Endothelial cell of umbilical vein (primary cell): ENCODE measurements at regions of chr2 and their contacts with region 1.

Region 1: DNA sequence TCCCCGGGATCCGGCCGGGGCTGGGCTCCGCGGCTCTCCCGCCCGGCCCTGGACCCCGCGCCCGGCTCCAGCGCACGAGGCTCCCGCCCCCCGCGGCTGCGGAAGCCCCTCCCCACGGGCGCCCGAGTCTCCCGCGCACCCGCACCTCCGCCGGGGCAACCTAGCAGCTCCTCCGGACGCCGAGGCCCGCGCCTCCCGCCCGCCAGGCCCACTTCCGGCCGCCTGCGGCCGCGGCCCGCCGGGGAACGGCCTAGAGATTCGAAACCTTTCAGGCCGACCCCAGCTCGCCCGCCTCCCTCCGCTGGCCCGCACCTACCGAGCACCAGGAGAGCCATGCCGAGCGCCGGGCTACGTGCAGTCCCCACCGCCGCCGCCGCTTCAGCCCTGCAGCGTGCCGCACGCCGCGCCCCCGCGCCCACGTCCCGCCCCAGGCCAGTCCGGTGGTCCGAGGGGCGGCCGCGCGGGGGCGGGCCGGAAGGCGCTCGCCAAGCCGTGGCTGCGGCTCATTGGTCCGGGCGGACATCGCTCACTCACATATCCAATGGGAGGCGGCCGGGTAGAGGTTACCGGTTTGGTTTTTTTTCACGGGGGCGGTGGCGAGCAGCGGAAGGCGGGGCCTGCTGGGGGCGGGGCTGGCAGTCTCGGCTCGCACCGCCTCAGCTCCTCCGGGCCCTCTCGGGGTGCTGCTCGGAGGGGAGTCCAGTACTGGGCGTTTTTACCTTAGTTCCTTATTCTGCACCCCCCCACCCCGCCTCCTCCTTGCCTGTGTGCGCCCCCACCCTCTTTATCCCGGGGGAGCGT is at the start of gene PDIA6:
- DNase-seq: peak; percentile 98
- H3K4me3 ChIP-seq: peak within 1 kb of the TSS; percentile 53 to 95 (median 67)
- H3K27ac ChIP-seq: peak within 1 kb of the TSS; percentile 64
- H3K4me1 ChIP-seq: peaks cover 27% of the 10 kb centered on the region
- H3K27me3 ChIP-seq: peaks cover 0 to 2% of the 10 kb centered on the region in 2 experiments
- CTCF ChIP-seq: no peak
- POLR2A ChIP-seq: peak; percentile 72
- total RNA-seq, gene PDIA6: 424 and 433 TPM in 2 replicates

Region 2: DNA sequence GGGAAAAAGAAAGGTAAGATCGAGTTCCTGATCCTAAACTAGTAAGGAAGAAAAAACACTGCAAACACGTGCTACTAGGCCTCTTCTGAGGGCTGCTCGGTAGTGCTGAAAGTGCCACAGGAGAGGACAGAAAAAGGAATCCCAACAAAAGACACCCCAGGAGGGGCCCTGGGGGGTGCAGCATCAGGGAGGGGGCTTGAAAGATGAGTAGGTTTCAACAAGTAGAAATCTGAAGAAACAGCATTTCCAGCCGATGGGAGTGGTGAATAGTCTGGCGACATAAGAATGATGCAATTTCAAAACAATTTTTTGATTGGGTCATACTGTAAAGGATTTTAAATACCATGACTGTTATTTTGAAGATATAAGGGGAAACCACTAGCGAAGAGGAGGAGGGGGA is 221.4 kb before region 1 on chr2:
- CTCF ChIA-PET with region 1: no interaction called
- POLR2A ChIA-PET with region 1: no interaction called
- dilution Hi-C with region 1: no loop called
- intact Hi-C with region 1: no loop called
- DNase-seq: no peak
- H3K4me3 ChIP-seq: no peak overlapping the region
- H3K27ac ChIP-seq: no peak overlapping the region
- H3K4me1 ChIP-seq: peaks cover 15% of the 10 kb centered on the region
- H3K27me3 ChIP-seq: no peaks in the 10 kb centered on the region
- CTCF ChIP-seq: no peak
- POLR2A ChIP-seq: no peak

Region 3: DNA sequence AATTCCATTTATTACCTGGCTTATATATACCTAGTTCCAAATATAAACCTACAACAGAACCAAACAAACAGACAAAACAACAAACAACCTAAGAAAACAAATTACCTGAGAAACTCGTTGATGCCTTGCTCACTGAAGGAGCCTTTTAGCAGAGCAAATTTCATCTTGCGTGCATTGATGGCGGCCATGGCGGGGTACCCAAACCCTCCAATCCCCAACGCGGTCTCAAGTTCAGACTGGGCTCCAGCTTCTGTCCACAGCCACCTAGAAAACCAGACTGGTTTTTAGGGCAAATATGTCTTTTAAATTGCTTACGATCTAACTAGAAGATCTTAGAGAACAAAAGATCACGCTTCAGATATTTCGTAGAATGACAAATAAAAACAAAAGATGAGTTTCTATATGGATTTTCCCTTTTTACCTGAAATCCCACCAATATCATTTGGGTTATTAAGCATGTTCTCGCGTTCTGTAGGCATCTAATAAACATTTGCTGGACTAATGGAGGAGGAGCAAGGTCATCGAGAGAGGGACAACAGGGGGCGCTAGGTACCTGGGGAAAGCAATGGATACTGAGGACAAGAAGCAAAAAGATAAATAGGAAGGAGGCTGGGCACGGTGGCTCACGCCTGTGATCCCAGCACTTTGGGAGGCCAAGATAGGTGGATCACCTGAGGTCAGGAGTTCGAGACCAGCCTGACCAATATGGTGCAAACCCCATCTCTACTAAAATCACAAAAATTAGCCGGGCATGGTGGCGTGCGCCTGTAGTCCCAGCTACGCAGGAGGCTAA is 25.2 kb before region 1 on chr2:
- CTCF ChIA-PET with region 1: no interaction called
- POLR2A ChIA-PET with region 1: no interaction called
- dilution Hi-C with region 1: no loop called
- intact Hi-C with region 1: loop called (anchors 1 kb)
- DNase-seq: peak; percentile 26
- H3K4me3 ChIP-seq: no peak overlapping the region
- H3K27ac ChIP-seq: no peak overlapping the region
- H3K4me1 ChIP-seq: peaks cover 14% of the 10 kb centered on the region
- H3K27me3 ChIP-seq: no peaks in the 10 kb centered on the region
- CTCF ChIP-seq: peak; percentile 20 to 34
- POLR2A ChIP-seq: no peak

Region 4: GRCh38 chr2:10935953-10936942 is 123.7 kb after region 1 on chr2:
- CTCF ChIA-PET with region 1: no interaction called
- POLR2A ChIA-PET with region 1: no interaction called
- dilution Hi-C with region 1: no loop called
- intact Hi-C with region 1: loop called (anchors 1 kb)
- DNase-seq: peak; percentile 96
- H3K4me3 ChIP-seq: no peak overlapping the region
- H3K27ac ChIP-seq: peak overlapping the region; percentile 88
- H3K4me1 ChIP-seq: peaks cover 31% of the 10 kb centered on the region
- H3K27me3 ChIP-seq: peaks cover 0 to 2% of the 10 kb centered on the region in 2 experiments
- CTCF ChIP-seq: no peak
- POLR2A ChIP-seq: no peak